ENCODE measurements at regions of chr10 and their contacts with region 1.

Region 1: DNA sequence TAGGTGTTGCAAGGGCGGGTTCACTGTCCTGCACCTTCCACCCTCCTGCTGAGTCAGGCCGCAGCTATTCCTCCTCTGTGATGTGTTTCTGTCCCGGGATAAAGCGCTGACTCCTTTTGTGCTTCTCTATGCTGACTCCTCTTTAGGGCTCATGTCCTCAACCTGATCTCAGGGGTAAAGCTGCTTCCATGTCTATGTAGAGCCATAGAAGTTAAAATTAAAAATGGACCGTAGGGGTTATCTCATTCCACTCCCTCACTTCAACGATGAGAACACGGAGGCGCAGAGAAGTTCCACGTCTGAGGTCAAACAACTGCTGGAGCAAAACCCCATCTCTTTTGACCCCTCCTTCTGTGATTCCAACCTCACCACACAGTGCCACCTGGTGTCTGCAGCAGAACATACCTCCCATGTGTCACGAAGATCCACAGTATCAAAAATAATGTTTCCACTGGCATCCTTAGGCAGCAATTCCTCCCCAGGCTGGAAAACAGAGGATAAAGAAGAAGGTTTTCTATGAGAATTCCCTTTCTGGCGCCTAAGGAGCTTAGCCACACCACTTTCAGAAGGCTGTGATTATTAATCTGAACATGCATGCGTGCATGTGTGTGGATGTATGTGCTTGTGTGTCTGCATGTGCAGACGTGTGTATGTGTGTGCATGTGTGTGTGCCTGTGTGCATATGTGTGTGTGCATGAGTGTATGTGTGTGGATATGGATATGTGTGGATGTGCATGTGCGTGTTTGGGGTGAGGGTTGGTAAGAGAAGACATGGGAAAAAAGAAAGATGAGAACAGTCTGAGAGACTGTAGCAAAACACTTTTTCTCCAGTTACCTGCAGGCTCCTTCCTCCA is 81.2 kb upstream of the UCN3 start:
- DNase-seq: peak; percentile 79
- H3K4me3 Mint-ChIP-seq: no peak overlapping the region
- H3K27ac Mint-ChIP-seq: peak overlapping the region; percentile 84
- H3K4me1 Mint-ChIP-seq: peaks cover 44% of the 10 kb centered on the region
- H3K27me3 Mint-ChIP-seq: no peaks in the 10 kb centered on the region

Region 2: DNA sequence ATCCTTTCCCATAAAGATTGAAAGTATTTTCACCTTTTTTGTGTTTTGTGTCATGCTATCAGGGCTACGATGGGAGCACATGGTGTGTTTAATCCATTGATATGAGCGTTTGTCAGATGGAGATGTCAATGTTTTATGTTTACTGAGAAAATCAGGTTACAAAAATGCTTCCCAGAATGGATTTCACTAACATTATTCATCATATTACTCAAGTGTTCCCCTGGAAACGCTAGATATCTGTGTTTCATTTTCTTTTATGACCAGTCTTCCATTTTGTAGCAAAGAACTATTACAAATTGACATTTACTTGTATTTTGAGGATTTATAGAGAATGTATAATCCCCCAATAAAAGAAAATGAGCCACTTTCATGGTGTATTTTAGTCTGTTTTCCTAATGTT is 751.1 kb before region 1 on chr10:
- CTCF ChIA-PET with region 1: no interaction called
- DNase-seq: no peak
- H3K4me3 Mint-ChIP-seq: no peak overlapping the region
- H3K27ac Mint-ChIP-seq: no peak overlapping the region
- H3K4me1 Mint-ChIP-seq: no peaks in the 10 kb centered on the region
- H3K27me3 Mint-ChIP-seq: peaks cover under 1% of the 10 kb centered on the region

Region 3: GRCh38 chr10:5229019-5229418 is 54.5 kb before region 1 on chr10:
- CTCF ChIA-PET with region 1: no interaction called
- DNase-seq: no peak
- H3K4me3 Mint-ChIP-seq: no peak overlapping the region
- H3K27ac Mint-ChIP-seq: no peak overlapping the region
- H3K4me1 Mint-ChIP-seq: no peaks in the 10 kb centered on the region
- H3K27me3 Mint-ChIP-seq: no peaks in the 10 kb centered on the region

Region 4: DNA sequence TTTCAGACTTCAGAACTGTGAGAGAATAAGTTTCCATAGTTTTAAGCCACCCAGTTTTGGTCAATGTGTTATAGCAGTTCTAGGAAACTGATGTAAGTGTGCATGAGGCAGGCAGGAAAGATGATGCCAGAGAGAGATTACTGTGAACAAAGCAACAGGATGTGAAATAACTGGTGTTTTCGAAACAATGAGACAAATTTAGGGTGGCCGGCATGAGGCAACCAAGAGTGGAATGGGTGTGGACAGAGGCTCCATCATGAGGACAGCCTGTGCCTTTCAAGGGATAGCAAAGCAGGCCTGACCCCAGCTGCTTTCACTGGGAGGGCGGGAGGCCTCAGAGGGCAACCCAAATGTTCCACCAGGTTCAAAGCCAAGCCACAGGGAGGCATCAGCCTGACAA is 13.9 kb after region 1 on chr10:
- CTCF ChIA-PET with region 1: interaction called, 20 read pairs
- DNase-seq: peak; percentile 71
- H3K4me3 Mint-ChIP-seq: peak overlapping the region; percentile 51
- H3K27ac Mint-ChIP-seq: peak overlapping the region; percentile 99
- H3K4me1 Mint-ChIP-seq: peaks cover 72% of the 10 kb centered on the region
- H3K27me3 Mint-ChIP-seq: no peaks in the 10 kb centered on the region

Region 5: DNA sequence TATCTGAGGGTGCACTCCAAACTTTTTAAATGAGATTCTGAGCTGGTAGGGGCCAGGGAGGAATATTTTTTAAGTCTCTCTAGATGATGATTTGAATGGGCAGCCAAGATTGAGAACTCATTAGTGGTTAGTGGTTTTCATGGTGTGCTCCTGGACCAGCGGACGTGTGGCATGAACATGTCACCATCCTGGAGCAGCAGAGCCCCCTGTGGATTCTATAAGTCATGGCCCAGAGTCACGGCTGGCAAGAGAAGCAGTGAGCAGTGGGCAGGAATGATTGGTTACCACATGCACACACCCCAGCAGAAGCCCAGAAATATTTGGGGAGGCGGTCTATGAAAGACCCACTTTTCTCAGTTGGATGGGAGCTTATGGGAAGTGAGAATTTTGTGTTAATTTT is 60.0 kb after region 1 on chr10:
- CTCF ChIA-PET with region 1: no interaction called
- DNase-seq: no peak
- H3K4me3 Mint-ChIP-seq: no peak overlapping the region
- H3K27ac Mint-ChIP-seq: no peak overlapping the region
- H3K4me1 Mint-ChIP-seq: peaks cover 5% of the 10 kb centered on the region
- H3K27me3 Mint-ChIP-seq: peaks cover 7% of the 10 kb centered on the region

Region 6: GRCh38 chr10:5698062-5698461 is 414.5 kb after region 1 on chr10:
- CTCF ChIA-PET with region 1: no interaction called
- DNase-seq: no peak
- H3K4me3 Mint-ChIP-seq: no peak overlapping the region
- H3K27ac Mint-ChIP-seq: no peak overlapping the region
- H3K4me1 Mint-ChIP-seq: peaks cover 14% of the 10 kb centered on the region
- H3K27me3 Mint-ChIP-seq: peaks cover under 1% of the 10 kb centered on the region

Measured in activated naive CD4-positive, alpha-beta T cell treated with anti-CD3 and anti-CD28 coated beads, Interleukin-2, amount 10 ng/mL, durations not matched to agents 7 days and 5 days (primary cell).